IMR-90 (cell line): ENCODE measurements at regions of chr3 and their contacts with region 1.

Region 1: GRCh38 chr3:3134750-3135448 is 8.2 kb downstream of the TRNT1 start:
- DNase-seq: peak; percentile 60
- ATAC-seq: peak; percentile 85
- H3K4me3 ChIP-seq: no peak overlapping the region
- H3K27ac ChIP-seq: no peak overlapping the region
- H3K4me1 ChIP-seq: no peaks in the 10 kb centered on the region; the same call in 1 of the 2 replicates
- H3K27me3 ChIP-seq: no peaks in the 10 kb centered on the region
- CTCF ChIP-seq: no peak
- POLR2A ChIP-seq: no peak
- RAD21 ChIP-seq: no peak

Region 2: GRCh38 chr3:2741516-2741915 is 393.4 kb before region 1 on chr3:
- CTCF ChIA-PET with region 1: no interaction called
- POLR2A ChIA-PET with region 1: no interaction called
- dilution Hi-C with region 1: no loop called
- in situ Hi-C with region 1: no loop called
- intact Hi-C with region 1: no loop called
- DNase-seq: no peak
- ATAC-seq: no peak
- H3K4me3 ChIP-seq: no peak overlapping the region
- H3K27ac ChIP-seq: no peak overlapping the region
- H3K4me1 ChIP-seq: no peaks in the 10 kb centered on the region
- H3K27me3 ChIP-seq: no peaks in the 10 kb centered on the region
- CTCF ChIP-seq: no peak
- POLR2A ChIP-seq: no peak
- RAD21 ChIP-seq: no peak

Region 3: GRCh38 chr3:3149560-3149959 is 14.7 kb after region 1 on chr3:
- CTCF ChIA-PET with region 1: no interaction called
- POLR2A ChIA-PET with region 1: no interaction called
- dilution Hi-C with region 1: no loop called
- in situ Hi-C with region 1: no loop called
- intact Hi-C with region 1: loop called (anchors 2 kb)
- DNase-seq: no peak
- ATAC-seq: no peak
- H3K4me3 ChIP-seq: no peak overlapping the region
- H3K27ac ChIP-seq: no peak overlapping the region
- H3K4me1 ChIP-seq: no peaks in the 10 kb centered on the region; the same call in 1 of the 2 replicates
- H3K27me3 ChIP-seq: no peaks in the 10 kb centered on the region
- CTCF ChIP-seq: no peak
- POLR2A ChIP-seq: no peak
- RAD21 ChIP-seq: no peak